ENCODE measurements at regions of chr5 and their contacts with region 1.

Region 1: GRCh38 chr5:31825518-31826068 is 186.7 kb downstream of the PDZD2 start:
- DNase-seq: peak; percentile 36 to 63
- ATAC-seq: peak; percentile 94 to 97
- H3K4me3 ChIP-seq: no peak overlapping the region
- H3K27ac ChIP-seq: peak overlapping the region in 1 of 2 experiments; percentile 21; a peak in 1 of 6 replicates
- H3K4me1 ChIP-seq: peaks cover 5% of the 10 kb centered on the region; the same call in 1 of the 3 replicates
- CTCF ChIP-seq: peak; percentile 88
- EP300 ChIP-seq: no peak
- POLR2A ChIP-seq: no peak
- RAD21 ChIP-seq: peak; percentile 85 to 91

Region 2: DNA sequence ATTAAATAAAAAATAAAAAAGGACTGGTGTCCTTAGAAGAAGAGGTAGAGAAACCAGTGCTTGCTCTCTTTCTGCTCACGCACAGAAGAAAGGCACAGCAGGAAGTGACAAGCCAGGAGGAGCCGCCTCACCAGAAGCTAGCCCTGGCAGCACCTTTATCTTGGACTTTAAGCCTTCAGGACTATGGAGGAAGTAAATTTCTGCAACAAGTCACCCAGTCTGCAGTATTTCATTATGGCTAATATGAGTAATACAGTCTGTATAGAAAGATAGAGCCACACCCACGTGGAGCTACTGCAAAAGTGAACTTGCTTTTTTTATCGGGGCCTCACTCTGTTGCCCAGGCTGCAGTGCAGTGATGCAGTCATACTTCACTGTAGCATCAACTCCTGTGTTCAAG is 118.3 kb before region 1 on chr5:
- CTCF ChIA-PET with region 1: no interaction called
- POLR2A ChIA-PET with region 1: no interaction called
- DNase-seq: peak in 1 of 2 experiments; percentile 3
- ATAC-seq: 0 out of 6 replicates have a peak, but pooled peaks of 1 of the 2 experiments have one; percentile 13
- H3K4me3 ChIP-seq: no peak overlapping the region
- H3K27ac ChIP-seq: no peak overlapping the region
- H3K4me1 ChIP-seq: no peaks in the 10 kb centered on the region
- CTCF ChIP-seq: no peak
- EP300 ChIP-seq: no peak
- POLR2A ChIP-seq: no peak
- RAD21 ChIP-seq: no peak

Region 3: GRCh38 chr5:31921852-31922305 is 96.3 kb after region 1 on chr5:
- CTCF ChIA-PET with region 1: interaction called, 18 read pairs
- POLR2A ChIA-PET with region 1: no interaction called
- DNase-seq: no peak
- ATAC-seq: no peak
- H3K4me3 ChIP-seq: no peak overlapping the region
- H3K27ac ChIP-seq: no peak overlapping the region
- H3K4me1 ChIP-seq: no peaks in the 10 kb centered on the region
- CTCF ChIP-seq: no peak
- EP300 ChIP-seq: no peak
- POLR2A ChIP-seq: no peak
- RAD21 ChIP-seq: no peak

Region 4: GRCh38 chr5:32087086-32088082 is 261.8 kb after region 1 on chr5:
- CTCF ChIA-PET with region 1: interaction called, 241 read pairs
- POLR2A ChIA-PET with region 1: no interaction called
- DNase-seq: no peak
- ATAC-seq: 0 out of 6 replicates have a peak, but pooled peaks of 1 of the 2 experiments have one; percentile 17
- H3K4me3 ChIP-seq: no peak overlapping the region
- H3K27ac ChIP-seq: no peak overlapping the region
- H3K4me1 ChIP-seq: no peaks in the 10 kb centered on the region
- CTCF ChIP-seq: no peak
- EP300 ChIP-seq: no peak
- POLR2A ChIP-seq: no peak
- RAD21 ChIP-seq: no peak

Region 5: GRCh38 chr5:32109236-32109635 is 283.6 kb after region 1 on chr5:
- CTCF ChIA-PET with region 1: interaction called, 12 read pairs
- POLR2A ChIA-PET with region 1: no interaction called
- DNase-seq: no peak
- ATAC-seq: no peak
- H3K4me3 ChIP-seq: no peak overlapping the region
- H3K27ac ChIP-seq: no peak overlapping the region
- H3K4me1 ChIP-seq: no peaks in the 10 kb centered on the region
- CTCF ChIP-seq: no peak
- EP300 ChIP-seq: no peak
- POLR2A ChIP-seq: no peak
- RAD21 ChIP-seq: no peak

Region 6: GRCh38 chr5:32174011-32174870 is 348.6 kb after region 1 on chr5 and contains the start of gene GOLPH3:
- CTCF ChIA-PET with region 1: no interaction called
- POLR2A ChIA-PET with region 1: no interaction called
- DNase-seq: peak; percentile 87 to 88
- ATAC-seq: peak; percentile 93 to 94
- H3K4me3 ChIP-seq: peak within 1 kb of the TSS; percentile 77
- H3K27ac ChIP-seq: peak within 1 kb of the TSS; percentile 91 to 98
- H3K4me1 ChIP-seq: peaks cover 30% of the 10 kb centered on the region
- CTCF ChIP-seq: no peak
- EP300 ChIP-seq: no peak
- POLR2A ChIP-seq: peak; percentile 96
- RAD21 ChIP-seq: no peak; a peak in 1 of 5 replicates
- polyA plus RNA-seq, gene GOLPH3: 62.4 and 78.7 TPM in 2 replicates

Measured in A549 (cell line).